Breast epithelium (tissue), 4 donors: ENCODE measurements at regions of chr12 and their contacts with region 1.

Region 1: DNA sequence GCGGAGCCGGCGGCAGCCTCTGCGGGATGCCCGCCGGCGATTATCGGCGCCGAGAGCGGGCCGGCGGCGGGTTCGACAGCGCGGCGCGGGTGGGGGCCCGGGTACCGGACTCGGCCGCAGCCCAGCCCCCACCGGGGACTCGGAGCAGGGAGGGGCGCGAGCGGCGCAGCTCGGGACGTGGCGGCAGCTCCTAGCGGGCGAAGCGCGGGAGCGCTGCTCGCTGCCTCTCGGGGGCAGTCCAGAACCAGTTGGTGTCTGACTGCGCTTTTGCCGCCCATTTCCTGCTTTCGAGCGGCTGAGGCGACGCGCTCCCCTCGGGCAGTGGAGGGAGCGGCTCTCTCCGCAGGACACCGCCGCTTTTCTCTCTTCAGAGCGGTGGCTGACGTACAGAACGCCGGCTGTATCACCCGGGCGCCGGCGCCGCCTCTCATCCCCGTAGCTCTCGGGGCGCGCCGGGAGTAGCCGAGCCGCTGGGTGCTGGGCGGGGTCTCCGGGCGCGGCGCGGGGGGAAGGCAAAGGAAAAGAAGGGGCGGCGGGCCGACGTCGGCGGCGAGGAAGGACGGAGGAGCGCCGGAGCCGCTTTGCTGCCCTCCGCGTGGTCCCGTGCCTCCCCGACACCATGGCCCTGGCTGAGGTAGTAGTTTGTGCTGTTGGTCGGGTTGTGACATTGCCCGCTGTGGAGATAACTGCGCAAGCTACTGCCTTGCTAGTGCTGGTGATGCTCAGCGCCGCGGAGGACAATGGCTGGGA is 136.6 kb downstream of the MON2 start:
- DNase-seq: peak; percentile 78 to 82
- H3K4me3 ChIP-seq: peak overlapping the region; percentile 73 to 85 (median 76)
- H3K27ac ChIP-seq: peak overlapping the region; percentile 99 to 100
- H3K4me1 ChIP-seq: peaks cover 0 to 4% of the 10 kb centered on the region in 2 donors
- H3K27me3 ChIP-seq: no peaks in the 10 kb centered on the region
- CTCF ChIP-seq: peak; percentile 7 to 57 (median 52)
- POLR2A ChIP-seq: peak; percentile 12

Region 2: GRCh38 chr12:62259993-62260732 is 343.1 kb before region 1 on chr12 and contains the start of gene USP15:
- intact Hi-C with region 1: no loop called
- DNase-seq: peak; percentile 92 to 94
- H3K4me3 ChIP-seq: peak within 1 kb of the TSS; percentile 90 to 100 (median 90)
- H3K27ac ChIP-seq: peak within 1 kb of the TSS; percentile 96 to 98
- H3K4me1 ChIP-seq: no peaks in the 10 kb centered on the region
- H3K27me3 ChIP-seq: no peaks in the 10 kb centered on the region
- CTCF ChIP-seq: peak in 2 of 3 donors; percentile 46 to 62
- POLR2A ChIP-seq: peak; percentile 51
- total RNA-seq, gene USP15: 65.9 to 234 (median 110) TPM

Region 3: DNA sequence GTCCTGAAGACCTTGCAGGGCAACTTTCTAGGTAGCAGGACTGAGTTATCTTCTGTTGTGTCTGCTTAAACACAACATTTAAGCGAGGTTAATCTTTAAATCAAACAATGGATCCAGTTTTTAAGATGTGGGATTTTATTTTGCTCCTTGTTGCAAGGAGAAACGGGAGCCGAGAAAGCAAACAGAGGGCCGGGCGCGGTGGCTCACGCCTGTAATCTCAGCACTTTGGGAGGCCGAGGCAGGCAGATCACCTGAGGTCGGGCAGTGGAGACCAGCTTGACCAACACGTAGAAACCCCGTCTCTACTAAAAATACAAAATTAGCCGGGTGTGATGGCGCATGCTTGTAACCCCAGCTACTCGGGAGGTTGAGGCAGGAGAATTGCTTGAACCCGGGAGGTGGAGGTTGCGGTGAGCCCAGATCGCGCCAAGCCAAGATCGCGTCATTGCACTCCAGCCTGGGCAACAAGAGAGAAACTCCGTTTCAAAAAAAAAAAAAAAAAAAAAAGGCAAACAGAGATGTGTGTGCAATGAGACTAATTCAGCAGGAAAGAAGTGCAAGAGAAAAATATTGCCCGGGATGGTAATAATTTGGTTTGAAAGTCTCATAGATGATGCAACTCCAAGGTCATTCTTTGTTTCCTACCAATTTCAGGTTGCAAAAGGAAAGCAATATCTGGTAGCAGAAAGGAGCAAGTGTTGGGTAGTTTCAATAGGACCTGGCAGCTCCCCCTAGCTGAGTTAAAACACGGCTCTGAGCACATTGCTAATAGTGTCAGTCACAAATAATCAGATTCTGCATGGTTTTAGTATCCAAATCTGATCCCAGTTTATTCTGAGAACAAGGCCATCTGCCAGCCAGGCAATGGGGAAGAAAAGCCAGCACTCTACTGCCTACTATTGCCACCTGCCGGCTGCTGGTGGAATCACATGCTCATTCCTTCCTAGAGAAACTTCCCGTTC is 190.3 kb after region 1 on chr12:
- intact Hi-C with region 1: loop called (anchors 5 kb)
- DNase-seq: peak; percentile 81 to 82
- H3K4me3 ChIP-seq: no peak overlapping the region
- H3K27ac ChIP-seq: peak overlapping the region in 1 of 2 donors; percentile 39
- H3K4me1 ChIP-seq: no peaks in the 10 kb centered on the region
- H3K27me3 ChIP-seq: no peaks in the 10 kb centered on the region
- CTCF ChIP-seq: peak; percentile 95 to 96 (median 96)
- POLR2A ChIP-seq: no peak